Activated CD4-positive, alpha-beta T cell treated with anti-CD3 and anti-CD28 coated beads for 36 hours (primary cell): ENCODE measurements at regions of chr9 and their contacts with region 1.

Region 1: DNA sequence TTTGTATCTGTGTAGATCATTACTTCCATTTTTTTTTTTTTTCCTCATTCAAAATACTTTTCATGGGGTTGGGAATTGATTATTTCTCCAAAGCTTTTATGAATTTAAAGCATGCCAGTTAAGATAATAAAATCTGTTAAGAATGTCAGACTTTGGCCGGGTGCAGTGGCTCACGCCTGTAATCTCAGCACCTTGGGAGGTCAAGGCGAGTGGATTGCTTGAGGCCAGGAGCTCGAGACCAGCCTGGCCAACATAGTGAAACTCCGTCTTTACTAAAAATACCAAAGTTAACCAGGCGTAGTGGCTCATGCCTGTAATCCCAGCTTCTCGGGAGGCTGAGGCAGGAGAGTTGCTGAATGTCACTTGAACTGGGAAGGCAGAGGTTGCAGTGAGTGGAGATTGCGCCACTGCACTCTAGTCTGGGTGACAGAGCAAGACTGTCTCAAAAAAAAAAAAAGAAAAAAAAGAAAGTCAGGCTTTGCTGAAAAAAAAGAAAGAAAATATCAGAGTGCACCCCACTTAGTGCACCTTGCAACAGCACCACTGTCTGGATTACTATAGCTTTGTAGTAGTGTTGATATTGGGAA is 18.5 kb downstream of the TBC1D2 start:
- DNase-seq: no peak
- ATAC-seq: no peak
- H3K4me3 Mint-ChIP-seq: no peak overlapping the region
- H3K27ac Mint-ChIP-seq: no peak overlapping the region
- H3K4me1 Mint-ChIP-seq: no peaks in the 10 kb centered on the region
- H3K27me3 Mint-ChIP-seq: no peaks in the 10 kb centered on the region

Region 2: DNA sequence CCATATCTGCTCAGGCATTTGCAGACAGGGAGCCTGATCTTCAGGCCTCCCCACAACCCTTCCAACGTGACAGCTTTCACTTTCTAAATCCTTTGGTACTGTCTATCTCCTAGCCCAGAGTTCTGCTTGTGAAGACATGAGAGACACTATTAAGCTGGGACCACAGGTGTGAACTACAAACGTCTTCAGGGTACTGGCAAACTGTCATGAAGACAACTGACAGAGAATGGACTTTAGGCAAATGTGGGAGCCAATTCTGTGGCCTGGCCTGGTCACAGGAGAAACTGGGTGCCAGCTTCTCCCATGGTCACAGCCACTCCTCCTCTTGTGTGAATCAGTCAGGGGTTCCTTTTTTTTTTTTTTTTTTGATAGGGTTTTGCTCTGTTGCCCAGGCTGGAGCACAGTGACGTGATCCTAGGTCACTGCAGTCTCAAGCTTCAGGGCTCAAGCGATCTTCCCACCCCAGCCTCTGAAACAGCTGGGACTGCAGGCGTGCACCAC is 128.4 kb before region 1 on chr9:
- CTCF ChIA-PET with region 1: no interaction called
- POLR2A ChIA-PET with region 1: no interaction called
- intact Hi-C with region 1: no loop called
- DNase-seq: peak; percentile 60
- ATAC-seq: peak; percentile 88
- H3K4me3 Mint-ChIP-seq: peak overlapping the region; percentile 63
- H3K27ac Mint-ChIP-seq: peak overlapping the region; percentile 95
- H3K4me1 Mint-ChIP-seq: peaks cover 80% of the 10 kb centered on the region
- H3K27me3 Mint-ChIP-seq: no peaks in the 10 kb centered on the region

Region 3: DNA sequence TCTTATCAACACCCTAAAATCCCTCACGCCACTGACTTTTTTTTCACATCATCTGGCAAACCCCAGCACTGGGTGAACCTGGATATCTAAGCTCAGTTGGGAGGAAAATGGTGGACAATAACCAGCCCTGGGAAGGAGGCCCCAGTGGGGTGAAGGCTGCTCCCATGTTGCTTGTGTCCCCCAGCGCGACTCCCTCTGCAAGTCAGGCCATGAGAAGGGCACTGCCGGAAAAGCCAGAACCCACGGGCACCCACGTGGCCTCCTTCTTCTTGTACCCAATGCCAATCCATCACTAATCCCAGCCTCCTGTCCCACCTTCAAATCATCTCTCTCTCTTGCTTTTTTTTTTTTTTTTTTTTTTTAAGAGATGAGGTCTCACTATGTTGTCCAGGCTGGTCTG is 56.0 kb before region 1 on chr9:
- CTCF ChIA-PET with region 1: interaction called, 4 read pairs
- POLR2A ChIA-PET with region 1: interaction called, 12 read pairs
- intact Hi-C with region 1: no loop called
- DNase-seq: no peak
- ATAC-seq: no peak
- H3K4me3 Mint-ChIP-seq: no peak overlapping the region
- H3K27ac Mint-ChIP-seq: no peak overlapping the region
- H3K4me1 Mint-ChIP-seq: peaks cover 25% of the 10 kb centered on the region
- H3K27me3 Mint-ChIP-seq: no peaks in the 10 kb centered on the region